Mucosa of descending colon (tissue), 3 donors: ENCODE measurements at regions of chr21 and their contacts with region 1.

Region 1: DNA sequence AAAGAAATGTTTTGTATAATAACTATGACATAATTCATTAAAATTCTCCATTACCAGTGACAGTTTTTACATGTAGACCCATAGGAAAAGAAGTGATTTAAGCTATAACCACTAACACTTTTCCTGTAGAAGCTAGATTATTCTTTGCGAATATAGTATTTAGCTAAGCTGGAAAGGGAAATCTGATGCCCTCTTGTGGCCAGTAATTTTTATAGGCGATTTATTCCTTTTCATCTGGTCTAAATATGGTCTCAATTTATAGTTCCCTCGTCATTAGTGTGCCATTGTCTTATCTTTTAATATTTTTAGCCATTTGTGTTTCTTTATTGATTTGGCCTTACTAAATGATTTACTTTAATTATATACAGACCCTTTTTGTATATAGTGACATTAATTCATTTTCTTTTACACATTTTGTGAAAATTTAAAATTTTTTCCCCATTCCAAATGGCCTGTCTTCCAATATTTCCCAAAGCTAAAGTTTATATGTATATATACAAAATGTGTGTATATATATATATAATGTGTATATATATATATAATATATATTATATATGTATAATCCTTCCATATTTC is 26.7 kb downstream of the BTG3 start:
- DNase-seq: peak in 1 of 3 donors; percentile 58
- ATAC-seq: peak; percentile 51
- H3K4me3 ChIP-seq: no peak overlapping the region
- H3K4me1 ChIP-seq: no peaks in the 10 kb centered on the region
- CTCF ChIP-seq: peak; percentile 39

Region 2: DNA sequence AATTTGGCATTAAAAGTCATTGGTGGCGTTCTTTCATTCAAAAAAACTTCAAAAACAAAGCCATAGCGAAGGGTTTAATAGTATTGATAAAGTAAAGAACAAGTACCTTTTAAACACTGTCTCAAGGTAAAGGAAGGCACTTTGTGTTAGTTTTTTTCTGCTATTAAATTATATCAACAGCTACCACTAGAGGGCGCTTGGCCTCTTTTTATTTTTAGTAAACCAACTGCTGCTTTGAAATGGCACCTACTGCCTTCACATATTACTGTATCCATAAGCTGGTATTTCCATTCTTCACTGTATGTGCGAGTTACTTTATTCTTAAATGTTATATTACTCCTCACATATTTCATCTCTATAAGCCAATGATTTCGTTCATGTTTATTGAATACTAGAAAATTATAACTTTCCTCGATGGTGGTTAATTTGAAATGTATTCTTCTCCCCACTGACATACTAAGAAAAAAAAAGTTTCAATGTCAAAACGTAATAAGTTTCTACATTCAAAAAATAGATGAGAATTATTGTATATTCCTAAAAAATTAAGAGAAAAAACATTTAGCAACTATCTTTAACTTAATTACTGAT is 198.8 kb before region 1 on chr21:
- intact Hi-C with region 1: loop called (anchors 5 to 10 kb)
- DNase-seq: peak in 1 of 3 donors; percentile 88
- ATAC-seq: peak; percentile 85
- H3K4me3 ChIP-seq: no peak overlapping the region
- H3K4me1 ChIP-seq: no peaks in the 10 kb centered on the region
- CTCF ChIP-seq: peak; percentile 40

Region 3: GRCh38 chr21:17393413-17393812 is 192.6 kb before region 1 on chr21:
- intact Hi-C with region 1: loop called (anchors 5 to 10 kb)
- DNase-seq: no peak
- ATAC-seq: no peak
- H3K4me3 ChIP-seq: no peak overlapping the region
- H3K4me1 ChIP-seq: no peaks in the 10 kb centered on the region
- CTCF ChIP-seq: no peak

Region 4: DNA sequence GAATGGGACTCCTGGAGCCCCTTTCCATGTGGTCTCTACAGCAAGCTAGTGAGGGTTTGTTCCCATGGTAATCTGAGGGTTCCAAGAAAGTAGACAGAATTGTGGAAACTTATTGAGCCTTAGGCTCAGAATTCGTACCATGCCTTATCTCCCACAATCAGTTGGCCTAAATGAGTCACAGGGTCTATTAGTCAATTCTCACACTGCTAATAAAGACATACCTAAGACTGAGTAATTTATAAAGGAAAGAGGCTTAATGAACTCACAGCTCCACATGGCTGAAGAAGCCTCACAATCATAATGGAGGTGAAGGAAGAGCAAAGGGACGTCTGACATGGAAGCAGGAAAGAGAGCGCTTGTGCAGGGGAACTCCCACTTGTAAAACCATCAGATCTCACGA is 179.8 kb before region 1 on chr21:
- intact Hi-C with region 1: no loop called
- DNase-seq: no peak
- ATAC-seq: no peak
- H3K4me3 ChIP-seq: no peak overlapping the region
- H3K4me1 ChIP-seq: no peaks in the 10 kb centered on the region
- CTCF ChIP-seq: no peak

Region 5: GRCh38 chr21:17841103-17841502 is 255.1 kb after region 1 on chr21:
- intact Hi-C with region 1: no loop called
- DNase-seq: no peak
- ATAC-seq: no peak
- H3K4me3 ChIP-seq: no peak overlapping the region
- H3K4me1 ChIP-seq: no peaks in the 10 kb centered on the region
- CTCF ChIP-seq: no peak